CD14-positive monocyte (primary cell): ENCODE measurements at regions of chr5 and their contacts with region 1.

Region 1: DNA sequence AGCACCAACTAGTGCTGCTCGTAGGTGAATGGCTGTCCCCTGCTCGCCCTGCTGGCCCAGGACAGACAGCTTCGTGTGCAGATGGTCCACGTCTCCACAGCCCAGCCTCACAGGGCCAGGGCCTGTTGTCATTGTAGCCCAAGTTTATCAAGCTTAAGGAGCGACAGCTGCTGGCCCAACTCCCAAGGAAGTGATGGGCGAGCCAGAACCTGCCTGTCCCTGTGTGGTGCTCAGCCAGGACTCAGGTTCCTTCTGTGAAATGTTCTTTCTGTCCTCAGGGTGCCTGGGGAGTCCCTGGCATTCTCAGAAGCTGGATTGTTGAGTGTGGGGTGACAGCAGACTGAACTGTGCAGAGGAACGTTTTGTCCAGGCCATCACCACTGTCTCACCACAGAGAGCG is 16.4 kb downstream of the TRIP13 start:
- DNase-seq: no peak
- H3K4me3 ChIP-seq: no peak overlapping the region
- H3K4me3 Mint-ChIP-seq: no peak overlapping the region
- H3K27ac ChIP-seq: no peak overlapping the region
- H3K27ac Mint-ChIP-seq: peak overlapping the region in 1 of 7 donors; percentile 21
- H3K4me1 ChIP-seq: no peaks in the 10 kb centered on the region
- H3K4me1 Mint-ChIP-seq: no peaks in the 10 kb centered on the region
- H3K27me3 ChIP-seq: no peaks in the 10 kb centered on the region
- H3K27me3 Mint-ChIP-seq: peaks cover 0 to 2% (median 0%) of the 10 kb centered on the region in 3 donors
- CTCF ChIP-seq: no peak

Region 2: GRCh38 chr5:873328-873727 is 35.8 kb before region 1 on chr5:
- intact Hi-C with region 1: loop called in 1 of 2 experiments (anchors 5 kb)
- DNase-seq: no peak
- H3K4me3 ChIP-seq: no peak overlapping the region
- H3K4me3 Mint-ChIP-seq: no peak overlapping the region
- H3K27ac ChIP-seq: no peak overlapping the region
- H3K27ac Mint-ChIP-seq: peak overlapping the region in 2 of 7 donors; percentile 15 to 27
- H3K4me1 ChIP-seq: no peaks in the 10 kb centered on the region
- H3K4me1 Mint-ChIP-seq: no peaks in the 10 kb centered on the region
- H3K27me3 ChIP-seq: no peaks in the 10 kb centered on the region
- H3K27me3 Mint-ChIP-seq: no peaks in the 10 kb centered on the region
- CTCF ChIP-seq: no peak